ENCODE measurements at regions of chr5 and their contacts with region 1.

Region 1: GRCh38 chr5:68433923-68434879 is 218.6 kb downstream of the PIK3R1 start:
- DNase-seq: peak; percentile 97
- H3K4me3 Mint-ChIP-seq: peak overlapping the region; percentile 23
- H3K27ac Mint-ChIP-seq: peak overlapping the region; percentile 73
- H3K4me1 Mint-ChIP-seq: peaks cover 51% of the 10 kb centered on the region
- H3K27me3 Mint-ChIP-seq: peaks cover 12% of the 10 kb centered on the region

Region 2: DNA sequence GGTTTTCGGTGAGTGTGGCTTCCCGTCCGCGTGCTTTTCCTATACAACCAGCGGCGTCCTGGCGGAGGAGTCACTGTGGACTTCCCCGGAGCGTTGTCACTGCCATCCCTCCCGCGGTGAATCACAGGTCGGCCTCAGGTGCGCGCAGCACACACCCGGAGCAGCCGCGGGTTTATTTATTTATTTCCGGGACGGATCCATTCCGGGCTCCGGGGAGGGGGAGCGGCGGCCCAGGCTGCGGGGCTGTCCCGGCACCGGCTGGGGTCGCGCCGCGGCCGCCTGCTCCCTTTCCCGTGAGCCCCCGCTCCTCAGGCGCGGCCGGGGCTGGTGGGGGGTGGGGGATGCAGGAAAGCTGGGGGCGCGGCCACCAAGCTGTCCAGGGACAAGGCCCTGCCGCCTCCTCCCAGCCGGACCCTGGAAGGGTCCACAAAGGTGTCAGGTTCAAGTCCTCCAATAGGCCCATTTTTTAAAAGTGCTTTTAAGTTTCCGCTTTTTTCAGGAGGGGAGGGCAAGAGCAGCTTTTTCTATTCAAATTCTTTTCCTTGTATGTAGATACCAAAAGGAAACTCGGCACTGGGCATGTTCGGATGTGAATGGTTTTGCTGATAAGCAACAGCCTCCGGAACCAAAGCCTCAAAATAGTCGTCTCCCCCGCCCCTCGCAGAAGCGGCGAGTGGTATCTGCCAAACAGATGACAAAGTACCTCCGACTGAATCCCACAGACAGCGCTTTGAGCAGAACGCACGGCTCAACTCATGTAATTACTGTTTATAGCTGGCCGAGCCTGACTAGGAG is 1430.1 kb before region 1 on chr5:
- CTCF ChIA-PET with region 1: no interaction called
- intact Hi-C with region 1: loop called (anchors 10 kb)
- DNase-seq: peak; percentile 96
- H3K4me3 Mint-ChIP-seq: peak overlapping the region; percentile 94
- H3K27ac Mint-ChIP-seq: peak overlapping the region; percentile 97
- H3K4me1 Mint-ChIP-seq: peaks cover 58% of the 10 kb centered on the region
- H3K27me3 Mint-ChIP-seq: no peaks in the 10 kb centered on the region

Region 3: DNA sequence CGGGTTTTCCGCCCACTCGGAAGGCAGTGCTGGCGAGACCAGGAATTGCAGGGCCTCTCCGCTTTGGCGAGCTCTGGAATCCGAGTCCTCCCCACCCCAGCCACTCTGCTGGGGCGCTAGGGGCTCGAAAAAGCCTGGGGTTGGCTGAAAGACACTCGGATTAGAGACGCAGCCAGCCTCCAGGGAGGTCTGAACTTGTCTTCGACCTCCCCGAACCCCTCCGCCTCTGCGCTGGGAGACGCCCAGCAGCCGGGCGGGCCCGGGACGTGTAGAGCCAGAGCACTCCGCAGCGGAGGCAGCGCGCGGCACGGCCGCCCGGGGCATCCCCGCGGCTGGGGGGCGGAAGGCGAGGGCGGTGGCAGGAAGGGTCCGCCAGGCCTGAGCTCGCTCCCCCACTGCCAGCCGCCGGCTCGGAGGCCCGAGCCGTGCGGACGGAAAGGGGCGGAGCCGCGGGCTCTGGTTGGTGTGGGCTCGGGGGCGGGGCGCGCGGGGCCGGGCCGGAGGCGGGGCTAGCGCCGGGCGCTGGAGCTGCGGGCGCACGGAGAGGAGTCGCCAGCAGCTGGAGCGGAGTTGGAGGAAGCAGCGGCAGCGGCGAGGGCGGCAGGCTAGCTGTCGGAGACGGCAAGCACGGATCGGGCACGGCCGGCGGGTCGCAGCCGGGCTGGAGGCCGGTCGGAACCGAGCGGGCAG is 218.8 kb before region 1 on chr5 and contains the start of gene PIK3R1:
- CTCF ChIA-PET with region 1: no interaction called
- intact Hi-C with region 1: loop called (anchors 1 kb)
- DNase-seq: peak; percentile 93
- H3K4me3 Mint-ChIP-seq: peak within 1 kb of the TSS; percentile 91
- H3K27ac Mint-ChIP-seq: peak within 1 kb of the TSS; percentile 95
- H3K4me1 Mint-ChIP-seq: peaks cover 42% of the 10 kb centered on the region
- H3K27me3 Mint-ChIP-seq: no peaks in the 10 kb centered on the region
- total RNA-seq, gene PIK3R1: 28.5 to 31.4 TPM

Region 4: DNA sequence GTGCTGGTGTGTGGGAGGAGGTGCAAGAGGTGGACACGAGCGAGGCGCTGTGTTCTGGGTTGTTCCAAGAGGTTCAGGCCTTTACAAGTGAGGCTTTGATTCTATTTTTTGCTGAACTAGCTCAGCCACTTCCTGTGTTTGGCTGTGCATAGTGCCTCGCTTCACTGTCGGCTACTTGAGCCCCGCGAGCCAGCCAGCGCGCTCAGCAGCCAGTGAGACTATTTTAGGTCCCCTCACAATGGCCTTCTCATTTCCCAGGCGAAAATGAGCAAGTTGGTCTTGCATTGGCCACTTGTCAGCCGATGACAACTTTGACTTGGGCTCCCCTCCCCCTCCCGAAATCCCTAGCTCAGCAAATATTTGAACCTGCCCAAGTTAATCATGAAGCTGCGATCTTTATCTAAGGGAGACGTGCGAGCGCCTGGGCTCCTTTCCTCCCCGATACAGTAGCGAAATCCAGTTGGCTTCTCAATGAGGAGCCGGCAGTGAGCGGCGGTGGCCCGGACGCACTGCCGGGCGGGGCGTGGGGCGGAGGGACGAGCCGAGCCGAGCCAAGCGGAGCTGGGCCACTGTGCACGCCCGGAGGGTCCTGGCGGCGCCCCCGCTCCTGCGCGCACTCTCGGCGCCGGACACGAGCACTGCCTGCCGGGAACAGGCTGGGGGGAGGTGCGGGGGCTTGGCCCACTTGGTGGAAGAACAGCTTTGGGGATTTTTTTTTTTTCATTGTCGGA is 146.1 kb before region 1 on chr5:
- CTCF ChIA-PET with region 1: interaction called, 4 read pairs
- intact Hi-C with region 1: loop called (anchors 1 kb)
- DNase-seq: peak; percentile 58
- H3K4me3 Mint-ChIP-seq: peak overlapping the region; percentile 83
- H3K27ac Mint-ChIP-seq: peak overlapping the region; percentile 81
- H3K4me1 Mint-ChIP-seq: peaks cover 73% of the 10 kb centered on the region
- H3K27me3 Mint-ChIP-seq: no peaks in the 10 kb centered on the region

Region 5: GRCh38 chr5:68369457-68370125 is 64.6 kb before region 1 on chr5:
- CTCF ChIA-PET with region 1: no interaction called
- intact Hi-C with region 1: loop called (anchors 1 kb)
- DNase-seq: peak; percentile 73
- H3K4me3 Mint-ChIP-seq: no peak overlapping the region
- H3K27ac Mint-ChIP-seq: peak overlapping the region; percentile 19
- H3K4me1 Mint-ChIP-seq: peaks cover 36% of the 10 kb centered on the region
- H3K27me3 Mint-ChIP-seq: no peaks in the 10 kb centered on the region

Region 6: GRCh38 chr5:68460147-68460798 is 26.1 kb after region 1 on chr5:
- CTCF ChIA-PET with region 1: interaction called, 3 read pairs
- intact Hi-C with region 1: loop called (anchors 1 kb)
- DNase-seq: peak; percentile 66
- H3K4me3 Mint-ChIP-seq: no peak overlapping the region
- H3K27ac Mint-ChIP-seq: no peak overlapping the region
- H3K4me1 Mint-ChIP-seq: peaks cover 8% of the 10 kb centered on the region
- H3K27me3 Mint-ChIP-seq: no peaks in the 10 kb centered on the region

Measured in activated naive CD4-positive, alpha-beta T cell treated with anti-CD3 and anti-CD28 coated beads for 36 hours (primary cell).